Right cardiac atrium (tissue), 5 donors: ENCODE measurements at regions of chr7 and their contacts with region 1.

Region 1: GRCh38 chr7:25559581-25560367 is 331.5 kb upstream of the NPVF start:
- DNase-seq: no peak
- ATAC-seq: no peak
- H3K4me3 ChIP-seq: no peak overlapping the region
- H3K27ac ChIP-seq: no peak overlapping the region
- H3K4me1 ChIP-seq: peaks cover 2% of the 10 kb centered on the region
- H3K27me3 ChIP-seq: no peaks in the 10 kb centered on the region

Region 2: DNA sequence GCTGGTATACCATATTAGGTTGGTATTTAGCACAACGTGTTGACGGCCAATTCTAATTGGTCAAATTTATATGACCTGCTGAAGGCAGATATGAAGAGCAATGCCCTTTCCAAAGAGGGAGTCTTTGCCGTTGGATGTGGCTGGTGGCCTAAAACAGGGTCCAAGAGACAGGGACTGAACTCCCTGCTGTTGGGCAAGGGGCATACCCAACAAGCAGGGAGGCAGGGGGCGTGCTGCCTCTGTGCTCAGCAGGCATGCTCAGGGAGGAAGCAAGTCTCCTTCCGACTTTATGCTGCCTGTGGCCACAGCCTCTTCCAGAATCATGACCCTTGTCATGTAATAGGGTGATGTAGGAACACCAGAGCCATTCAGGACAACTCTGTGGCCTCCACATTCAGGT is 163.8 kb before region 1 on chr7:
- intact Hi-C with region 1: loop called in 2 of 4 experiments (anchors 2 to 5 kb)
- DNase-seq: no peak
- ATAC-seq: no peak
- H3K4me3 ChIP-seq: no peak overlapping the region
- H3K27ac ChIP-seq: no peak overlapping the region
- H3K4me1 ChIP-seq: no peaks in the 10 kb centered on the region
- H3K27me3 ChIP-seq: no peaks in the 10 kb centered on the region